ENCODE measurements at regions of chr18 and their contacts with region 1.

Region 1: DNA sequence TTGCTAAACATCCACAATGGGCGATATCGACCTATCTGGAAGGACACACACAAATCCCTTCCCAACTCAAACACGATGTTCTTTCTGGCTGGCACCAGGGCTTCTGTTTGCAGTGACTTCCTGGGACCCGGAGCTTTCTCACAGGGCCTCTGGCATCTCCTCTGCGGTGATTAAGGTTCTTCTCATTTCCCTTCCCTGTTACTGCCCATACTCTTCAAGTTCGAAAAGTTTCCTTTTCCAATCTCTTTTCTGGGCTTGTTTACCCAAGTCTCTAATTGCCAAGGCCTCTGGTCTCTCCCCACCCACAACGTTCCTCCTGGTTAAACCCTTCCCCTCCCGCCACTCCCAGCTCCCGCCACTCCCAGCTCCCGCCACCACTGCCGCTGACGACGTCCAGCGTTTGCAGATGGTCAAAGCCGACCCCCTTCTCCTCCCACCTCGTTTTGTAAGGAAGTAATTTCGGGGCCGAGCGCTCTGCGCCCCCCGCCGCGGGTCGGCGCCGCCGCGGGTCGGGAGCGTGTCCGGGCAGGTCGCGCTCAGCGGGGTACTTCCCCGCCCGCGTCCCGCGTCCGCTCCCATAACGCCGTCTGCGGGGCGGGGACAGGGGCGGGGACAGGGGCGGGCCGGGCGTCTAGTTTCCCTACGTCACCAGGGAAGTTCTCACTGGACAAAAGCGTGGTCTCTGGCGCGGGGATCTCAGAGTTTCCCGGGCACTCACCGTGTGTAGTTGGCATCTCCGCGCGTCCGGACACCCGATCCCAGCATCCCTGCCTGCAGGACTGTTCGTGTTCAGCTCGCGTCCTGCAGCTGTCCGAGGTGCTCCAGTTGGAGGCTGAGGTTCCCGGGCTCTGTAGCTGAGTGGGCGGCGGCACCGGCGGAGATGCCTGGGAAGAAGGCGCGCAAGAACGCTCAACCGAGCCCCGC is at the start of gene PMAIP1:
- DNase-seq: peak; percentile 84
- H3K4me3 Mint-ChIP-seq: peak within 1 kb of the TSS; percentile 97
- H3K27ac Mint-ChIP-seq: peak within 1 kb of the TSS; percentile 99
- H3K4me1 Mint-ChIP-seq: peaks cover 41% of the 10 kb centered on the region
- H3K27me3 Mint-ChIP-seq: no peaks in the 10 kb centered on the region
- total RNA-seq, gene PMAIP1: 57.2 and 59.5 TPM in 2 replicates

Region 2: DNA sequence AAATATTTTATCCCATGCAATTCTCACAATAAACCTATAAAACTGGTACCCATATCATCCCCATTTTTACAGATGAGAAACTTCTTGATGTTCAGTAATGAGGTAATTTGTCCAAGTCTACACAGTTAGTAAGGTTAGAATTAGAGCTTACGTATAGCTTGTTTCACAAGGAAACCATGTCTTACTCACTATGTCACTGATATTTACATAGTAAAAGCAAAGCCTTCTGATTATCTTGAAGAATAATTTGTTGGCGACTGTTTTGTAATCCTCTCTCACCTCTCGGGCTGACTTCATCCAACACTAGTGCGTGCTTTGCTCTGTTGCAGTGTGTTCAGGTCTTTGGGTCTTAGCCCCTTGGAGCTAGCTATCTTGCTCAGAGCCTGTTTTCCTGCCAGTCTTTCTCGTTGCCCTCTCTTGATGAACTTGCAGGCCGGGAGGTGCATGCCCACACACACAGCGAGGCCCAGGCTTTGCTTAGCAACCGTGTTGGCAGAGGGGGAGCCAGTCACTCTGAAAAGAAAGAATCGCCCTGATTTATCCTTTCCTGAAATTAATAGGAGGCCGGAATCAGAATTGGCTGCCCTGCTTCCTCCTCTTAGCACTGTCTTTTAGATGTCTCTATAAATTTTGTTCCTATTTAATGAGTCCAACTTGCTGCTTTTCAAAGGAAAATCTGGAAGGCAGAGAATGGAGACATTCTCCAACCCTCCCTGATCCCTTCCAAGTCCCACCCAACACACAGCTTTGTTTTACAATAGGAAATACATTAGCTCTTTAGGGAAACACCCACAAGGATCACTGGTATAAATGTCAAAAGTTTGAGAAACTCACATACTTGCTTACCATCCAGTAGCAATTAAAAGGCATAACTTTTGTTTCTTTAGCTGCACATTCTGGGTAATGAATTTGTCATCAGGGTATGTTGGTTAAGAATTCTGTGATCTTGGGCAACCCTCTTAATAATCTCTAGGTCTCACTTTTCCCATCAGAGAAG is 857.4 kb before region 1 on chr18:
- intact Hi-C with region 1: no loop called
- DNase-seq: no peak
- H3K4me3 Mint-ChIP-seq: no peak overlapping the region
- H3K27ac Mint-ChIP-seq: no peak overlapping the region
- H3K4me1 Mint-ChIP-seq: peaks cover 4% of the 10 kb centered on the region
- H3K27me3 Mint-ChIP-seq: peaks cover 7% of the 10 kb centered on the region

Region 3: GRCh38 chr18:59139371-59140298 is 759.9 kb before region 1 on chr18 and contains the start of gene SEC11C:
- intact Hi-C with region 1: loop called (anchors 1 kb)
- DNase-seq: peak; percentile 96
- H3K4me3 Mint-ChIP-seq: peak within 1 kb of the TSS; percentile 94
- H3K27ac Mint-ChIP-seq: peak within 1 kb of the TSS; percentile 98
- H3K4me1 Mint-ChIP-seq: peaks cover 34% of the 10 kb centered on the region
- H3K27me3 Mint-ChIP-seq: peaks cover 19% of the 10 kb centered on the region
- total RNA-seq, gene SEC11C: 147 and 148 TPM in 2 replicates

Region 4: GRCh38 chr18:59837586-59837985 is 62.0 kb before region 1 on chr18:
- intact Hi-C with region 1: loop called (anchors 1 kb)
- DNase-seq: peak; percentile 34
- H3K4me3 Mint-ChIP-seq: no peak overlapping the region
- H3K27ac Mint-ChIP-seq: no peak overlapping the region
- H3K4me1 Mint-ChIP-seq: peaks cover 20% of the 10 kb centered on the region
- H3K27me3 Mint-ChIP-seq: peaks cover 14% of the 10 kb centered on the region

Region 5: GRCh38 chr18:59885579-59886163 is 13.9 kb before region 1 on chr18:
- intact Hi-C with region 1: loop called (anchors 1 kb)
- DNase-seq: peak; percentile 38
- H3K4me3 Mint-ChIP-seq: peak overlapping the region; percentile 8
- H3K27ac Mint-ChIP-seq: peak overlapping the region; percentile 72
- H3K4me1 Mint-ChIP-seq: peaks cover 47% of the 10 kb centered on the region
- H3K27me3 Mint-ChIP-seq: no peaks in the 10 kb centered on the region

Region 6: GRCh38 chr18:59918320-59918755 is 18.8 kb after region 1 on chr18:
- intact Hi-C with region 1: no loop called
- DNase-seq: no peak
- H3K4me3 Mint-ChIP-seq: no peak overlapping the region
- H3K27ac Mint-ChIP-seq: peak overlapping the region; percentile 42
- H3K4me1 Mint-ChIP-seq: peaks cover 31% of the 10 kb centered on the region
- H3K27me3 Mint-ChIP-seq: no peaks in the 10 kb centered on the region

Region 7: DNA sequence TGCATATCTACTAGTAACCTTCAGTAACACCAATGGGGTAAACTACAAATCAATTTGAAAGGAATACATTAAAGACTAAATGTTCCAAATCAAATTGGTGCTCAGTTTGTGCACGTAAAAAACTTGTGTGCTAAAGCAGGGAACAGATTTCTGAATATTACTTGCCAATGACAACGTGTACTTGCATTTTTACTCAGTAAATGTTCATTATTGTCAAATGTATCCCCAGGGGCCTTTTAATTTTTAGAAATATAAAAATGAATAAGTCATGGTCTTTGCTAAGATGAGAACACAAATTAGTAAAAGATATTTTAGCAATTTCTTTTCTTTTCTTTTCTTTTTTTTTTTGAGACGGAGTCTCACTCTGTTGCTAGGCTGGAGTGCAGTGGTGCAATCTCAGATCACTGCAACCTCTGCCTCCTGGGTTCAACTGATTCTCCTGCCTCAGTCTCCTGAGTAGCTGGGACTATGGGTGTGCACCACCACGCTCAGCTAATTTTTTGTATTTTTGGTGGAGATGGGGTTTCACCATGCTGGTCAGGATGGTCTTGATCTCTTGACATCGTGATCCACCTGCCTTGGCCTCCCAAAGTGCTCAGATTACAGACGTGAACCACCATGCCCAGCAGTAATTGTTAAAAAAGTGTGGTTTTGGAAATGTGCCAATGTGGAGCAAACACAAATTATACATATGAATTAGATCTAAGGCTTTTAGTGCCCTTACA is 52.9 kb after region 1 on chr18:
- intact Hi-C with region 1: loop called (anchors 1 kb)
- DNase-seq: no peak
- H3K4me3 Mint-ChIP-seq: no peak overlapping the region
- H3K27ac Mint-ChIP-seq: no peak overlapping the region
- H3K4me1 Mint-ChIP-seq: peaks cover 17% of the 10 kb centered on the region
- H3K27me3 Mint-ChIP-seq: no peaks in the 10 kb centered on the region